ENCODE measurements at regions of chr18 and their contacts with region 1.

Region 1: GRCh38 chr18:59459369-59460079 is 100.5 kb upstream of the LMAN1 start:
- DNase-seq: no peak
- H3K4me3 ChIP-seq: no peak overlapping the region
- H3K27me3 ChIP-seq: no peaks in the 10 kb centered on the region
- CTCF ChIP-seq: peak; percentile 54

Region 2: DNA sequence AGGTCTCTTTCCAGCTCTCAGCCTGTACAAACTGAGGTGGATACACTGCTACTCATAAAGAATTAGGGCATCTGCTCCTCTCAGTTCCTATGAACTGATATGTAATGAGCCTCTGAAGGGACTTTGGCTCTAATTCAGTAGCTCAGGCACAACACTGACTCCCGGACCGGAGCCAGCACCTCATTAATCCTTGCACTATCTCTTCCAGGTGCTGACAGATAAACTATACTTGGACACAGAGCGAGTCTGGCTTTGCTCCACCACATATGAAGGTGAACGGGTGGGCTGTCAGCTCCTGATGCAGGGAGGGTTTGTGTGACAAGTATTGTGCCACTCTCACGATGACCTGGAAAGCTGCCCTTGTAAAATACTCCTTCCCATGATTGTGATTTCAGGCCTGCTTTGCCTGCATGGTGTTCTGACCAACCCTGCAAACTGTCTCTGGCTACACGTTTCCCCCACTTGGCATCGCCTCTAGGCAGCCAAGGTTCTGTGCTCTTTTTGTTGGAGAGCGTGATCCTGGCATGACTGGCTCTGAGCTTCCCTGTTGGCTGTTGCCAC is 11.1 kb after region 1 on chr18:
- CTCF ChIA-PET with region 1: interaction called, 12 read pairs
- POLR2A ChIA-PET with region 1: interaction called, 3 read pairs
- DNase-seq: no peak
- H3K4me3 ChIP-seq: no peak overlapping the region
- H3K27me3 ChIP-seq: no peaks in the 10 kb centered on the region
- CTCF ChIP-seq: no peak

Region 3: GRCh38 chr18:59623456-59624368 is 164.2 kb after region 1 on chr18:
- CTCF ChIA-PET with region 1: interaction called, 11 read pairs
- POLR2A ChIA-PET with region 1: no interaction called
- DNase-seq: peak; percentile 28
- H3K4me3 ChIP-seq: no peak overlapping the region
- H3K27me3 ChIP-seq: no peaks in the 10 kb centered on the region
- CTCF ChIP-seq: no peak

Region 4: GRCh38 chr18:60069145-60069544 is 609.6 kb after region 1 on chr18:
- CTCF ChIA-PET with region 1: no interaction called
- POLR2A ChIA-PET with region 1: no interaction called
- DNase-seq: no peak
- H3K4me3 ChIP-seq: no peak overlapping the region
- H3K27me3 ChIP-seq: no peaks in the 10 kb centered on the region
- CTCF ChIP-seq: no peak